ENCODE measurements at regions of chr5 and their contacts with region 1.

Region 1: GRCh38 chr5:68279984-68280383 is 64.4 kb downstream of the PIK3R1 start:
- DNase-seq: peak; percentile 88
- H3K4me3 Mint-ChIP-seq: peak overlapping the region; percentile 77
- H3K27ac Mint-ChIP-seq: peak overlapping the region; percentile 93
- H3K4me1 Mint-ChIP-seq: peaks cover 65% of the 10 kb centered on the region
- H3K27me3 Mint-ChIP-seq: no peaks in the 10 kb centered on the region

Region 2: DNA sequence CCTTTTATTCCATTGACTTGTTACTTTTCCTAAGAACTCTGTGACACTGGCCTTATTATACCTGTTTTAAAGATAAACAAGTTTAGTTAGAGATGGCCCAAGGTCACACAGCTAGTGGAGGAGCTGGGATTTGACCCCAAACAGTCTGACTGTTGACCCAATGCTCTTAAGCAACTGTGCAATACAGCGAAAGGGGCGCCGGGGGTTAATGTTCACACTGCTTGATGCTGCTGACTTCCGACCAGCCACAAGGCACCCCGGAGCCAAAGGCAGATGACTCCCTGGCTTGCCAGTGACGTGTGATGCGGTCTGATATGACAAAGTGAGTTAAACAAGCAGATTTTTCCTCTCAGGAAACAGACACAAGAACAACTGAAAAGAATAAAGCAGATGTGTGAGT is 40.5 kb before region 1 on chr5:
- intact Hi-C with region 1: loop called (anchors 1 kb)
- DNase-seq: peak; percentile 92
- H3K4me3 Mint-ChIP-seq: peak overlapping the region; percentile 77
- H3K27ac Mint-ChIP-seq: peak overlapping the region; percentile 86
- H3K4me1 Mint-ChIP-seq: peaks cover 56% of the 10 kb centered on the region
- H3K27me3 Mint-ChIP-seq: no peaks in the 10 kb centered on the region

Measured in activated CD4-positive, alpha-beta T cell treated with anti-CD3 and anti-CD28 coated beads, Interleukin-2, amount 10 ng/mL, durations not matched to agents 24 days and 14 days (primary cell).